ENCODE measurements at regions of chr16 and their contacts with region 1.

Region 1: DNA sequence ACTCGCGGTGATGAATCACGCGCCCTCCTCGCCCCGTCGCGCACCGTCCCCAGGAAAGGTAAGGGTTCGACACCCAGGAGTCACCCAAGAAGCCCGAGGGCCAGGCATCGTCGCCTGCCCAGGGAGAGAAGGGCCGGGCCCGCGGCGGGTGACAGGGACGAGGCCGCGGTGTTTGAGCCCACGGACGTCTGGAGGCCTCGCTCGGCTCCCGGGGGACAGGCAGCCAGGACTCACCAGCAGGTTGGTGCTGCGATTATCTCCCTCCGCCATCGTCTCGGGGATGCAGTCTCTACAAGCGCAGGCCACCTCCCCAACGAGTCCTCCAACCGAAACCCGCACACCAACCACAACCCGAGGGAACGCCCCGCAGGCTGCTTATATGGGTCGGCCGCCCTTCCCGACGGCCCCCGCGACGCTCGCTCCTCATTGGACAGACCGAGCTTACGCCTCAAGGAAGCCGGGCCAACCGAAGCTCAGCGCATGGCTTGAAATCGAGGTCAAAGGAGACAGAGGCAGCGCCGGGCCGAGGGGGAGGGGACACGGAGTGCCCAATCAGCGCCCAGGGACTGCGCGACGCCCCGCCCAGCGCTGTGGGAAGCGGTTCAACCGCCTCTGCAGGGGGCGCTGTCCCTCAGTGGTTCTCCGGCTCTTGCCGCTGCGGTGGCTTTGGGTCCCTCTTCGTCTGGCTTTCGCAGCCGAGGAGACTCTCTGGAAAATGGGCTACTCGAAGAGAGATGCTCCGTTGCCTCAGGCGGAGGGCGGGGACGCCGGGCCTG is at the start of gene ARL6IP1:
- DNase-seq: peak; percentile 99 to 100
- ATAC-seq: peak; percentile 92 to 98 (median 95)
- H3K4me3 ChIP-seq: peak within 1 kb of the TSS; percentile 77
- H3K27ac ChIP-seq: peak within 1 kb of the TSS; percentile 82
- H3K4me1 ChIP-seq: peaks cover 48% of the 10 kb centered on the region
- H3K27me3 ChIP-seq: no peaks in the 10 kb centered on the region
- CTCF ChIP-seq: peak; percentile 90
- total RNA-seq, gene ARL6IP1: 13.2 to 24.6 (median 15.1) TPM

Region 2: GRCh38 chr16:18582902-18583301 is 218.5 kb before region 1 on chr16:
- intact Hi-C with region 1: no loop called
- DNase-seq: no peak
- ATAC-seq: no peak
- H3K4me3 ChIP-seq: no peak overlapping the region
- H3K27ac ChIP-seq: no peak overlapping the region
- H3K4me1 ChIP-seq: no peaks in the 10 kb centered on the region
- H3K27me3 ChIP-seq: no peaks in the 10 kb centered on the region
- CTCF ChIP-seq: no peak

Region 3: GRCh38 chr16:18853694-18854093 is 52.3 kb after region 1 on chr16:
- intact Hi-C with region 1: loop called in 1 of 2 experiments (anchors 10 kb)
- DNase-seq: no peak
- ATAC-seq: peak in 3 of 4 donors; percentile 16 to 57 (median 25)
- H3K4me3 ChIP-seq: no peak overlapping the region
- H3K27ac ChIP-seq: no peak overlapping the region
- H3K4me1 ChIP-seq: no peaks in the 10 kb centered on the region
- H3K27me3 ChIP-seq: no peaks in the 10 kb centered on the region
- CTCF ChIP-seq: no peak

Region 4: DNA sequence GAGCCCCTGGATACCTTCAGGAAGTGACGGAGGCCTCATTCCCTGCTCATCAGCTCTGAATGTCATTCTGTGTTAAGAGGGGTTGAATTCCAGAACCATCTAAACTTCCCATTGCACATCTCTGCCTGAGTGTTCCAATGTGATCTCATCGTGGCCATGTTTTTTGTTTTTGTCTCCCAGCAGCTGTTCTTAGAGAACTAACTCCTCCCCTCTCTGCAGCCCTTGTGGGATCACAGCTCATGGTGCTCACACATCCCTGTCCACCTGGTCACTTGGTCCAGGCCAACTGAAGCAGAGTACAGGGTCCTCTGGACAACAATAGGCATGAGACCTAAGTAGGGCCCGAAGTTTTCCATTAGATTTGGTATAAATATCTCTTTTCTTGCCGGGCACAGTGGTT is 360.7 kb after region 1 on chr16:
- intact Hi-C with region 1: no loop called
- DNase-seq: no peak
- ATAC-seq: no peak
- H3K4me3 ChIP-seq: no peak overlapping the region
- H3K27ac ChIP-seq: no peak overlapping the region
- H3K4me1 ChIP-seq: no peaks in the 10 kb centered on the region
- H3K27me3 ChIP-seq: no peaks in the 10 kb centered on the region
- CTCF ChIP-seq: no peak

Measured in psoas muscle (tissue), 8 donors.